ENCODE measurements at regions of chr19 and their contacts with region 1.

Region 1: GRCh38 chr19:49533551-49534488 is 6.0 kb downstream of the RCN3 start:
- DNase-seq: peak; percentile 85
- H3K4me3 Mint-ChIP-seq: peak overlapping the region; percentile 45
- H3K27ac Mint-ChIP-seq: peak overlapping the region; percentile 79
- H3K4me1 Mint-ChIP-seq: peaks cover 27% of the 10 kb centered on the region
- H3K27me3 Mint-ChIP-seq: peaks cover 4% of the 10 kb centered on the region

Region 2: GRCh38 chr19:49546825-49547565 is 13.2 kb after region 1 on chr19:
- CTCF ChIA-PET with region 1: interaction called, 14 read pairs
- POLR2A ChIA-PET with region 1: interaction called, 3 read pairs
- DNase-seq: peak; percentile 85
- H3K4me3 Mint-ChIP-seq: peak overlapping the region; percentile 60
- H3K27ac Mint-ChIP-seq: peak overlapping the region; percentile 70
- H3K4me1 Mint-ChIP-seq: peaks cover 61% of the 10 kb centered on the region
- H3K27me3 Mint-ChIP-seq: no peaks in the 10 kb centered on the region

Region 3: DNA sequence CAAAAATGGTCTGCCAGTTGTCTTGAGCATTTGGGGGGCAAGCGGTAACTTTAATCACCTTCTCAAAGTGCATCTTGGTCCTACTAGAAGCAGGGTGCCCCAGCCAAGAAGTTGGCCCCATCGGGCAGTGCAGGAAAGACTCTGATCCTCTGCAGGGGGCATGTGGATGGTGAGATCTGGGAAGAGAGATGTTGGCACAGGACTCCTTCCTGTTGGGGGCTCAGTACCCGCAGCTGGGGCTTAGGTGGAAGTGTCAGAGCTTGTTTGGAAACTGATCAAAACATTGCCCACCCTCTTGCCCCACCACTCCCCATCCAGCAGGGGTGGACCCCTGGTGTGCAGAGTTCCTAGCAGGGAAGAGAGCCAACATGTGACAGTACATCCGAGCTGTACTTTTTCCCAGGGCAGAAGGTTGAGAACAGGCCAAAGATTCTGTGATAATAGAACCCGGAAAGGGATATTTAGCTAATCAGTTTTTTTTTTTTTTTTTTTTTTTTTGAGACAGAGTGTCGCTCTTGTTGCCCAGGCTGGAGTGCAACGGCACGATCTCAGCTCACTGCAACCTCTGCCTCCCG is 97.3 kb after region 1 on chr19:
- CTCF ChIA-PET with region 1: no interaction called
- POLR2A ChIA-PET with region 1: no interaction called
- DNase-seq: no peak
- H3K4me3 Mint-ChIP-seq: no peak overlapping the region
- H3K27ac Mint-ChIP-seq: no peak overlapping the region
- H3K4me1 Mint-ChIP-seq: no peaks in the 10 kb centered on the region
- H3K27me3 Mint-ChIP-seq: no peaks in the 10 kb centered on the region